ENCODE measurements at regions of chr3 and their contacts with region 1.

Region 1: DNA sequence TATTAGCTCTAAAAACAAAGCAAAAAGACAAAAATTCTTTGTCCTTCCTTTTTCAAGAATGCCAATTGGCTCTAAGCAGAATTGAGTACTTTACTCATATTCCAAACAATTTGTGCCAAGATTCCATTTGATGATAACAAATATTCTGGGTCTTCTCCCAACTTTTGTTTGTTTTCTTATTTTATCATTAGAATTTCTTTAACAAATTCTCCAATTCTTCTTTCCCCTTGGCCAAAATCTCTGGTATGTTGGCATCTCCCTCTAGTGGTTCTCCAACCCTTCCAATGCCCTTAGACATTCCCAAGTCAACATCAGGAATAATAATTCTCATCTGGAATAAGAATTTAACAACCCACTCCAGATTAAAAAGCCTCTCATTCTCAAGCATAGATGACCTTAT is 5.3 kb downstream of the CPOX start:
- DNase-seq: no peak
- H3K4me3 ChIP-seq: no peak overlapping the region
- H3K4me3 Mint-ChIP-seq: no peak overlapping the region
- H3K27ac ChIP-seq: no peak overlapping the region
- H3K27ac Mint-ChIP-seq: no peak overlapping the region
- H3K4me1 ChIP-seq: peaks cover 30% of the 10 kb centered on the region
- H3K4me1 Mint-ChIP-seq: peaks cover 34 to 46% (median 37%) of the 10 kb centered on the region in 4 donors
- H3K27me3 ChIP-seq: no peaks in the 10 kb centered on the region
- H3K27me3 Mint-ChIP-seq: no peaks in the 10 kb centered on the region

Region 2: GRCh38 chr3:98602078-98602678 is 14.1 kb after region 1 on chr3:
- CTCF ChIA-PET with region 1: interaction called, 26 read pairs
- POLR2A ChIA-PET with region 1: interaction called, 3 read pairs
- intact Hi-C with region 1: no loop called
- DNase-seq: peak in 3 of 5 donors; percentile 10 to 26 (median 24)
- H3K4me3 ChIP-seq: no peak overlapping the region
- H3K4me3 Mint-ChIP-seq: no peak overlapping the region
- H3K27ac ChIP-seq: no peak overlapping the region
- H3K27ac Mint-ChIP-seq: no peak overlapping the region
- H3K4me1 ChIP-seq: no peaks in the 10 kb centered on the region
- H3K4me1 Mint-ChIP-seq: no peaks in the 10 kb centered on the region
- H3K27me3 ChIP-seq: no peaks in the 10 kb centered on the region
- H3K27me3 Mint-ChIP-seq: peaks cover 7 to 12% of the 10 kb centered on the region in 2 donors